Ascending aorta (tissue), 2 donors: ENCODE measurements at regions of chr9 and their contacts with region 1.

Region 1: DNA sequence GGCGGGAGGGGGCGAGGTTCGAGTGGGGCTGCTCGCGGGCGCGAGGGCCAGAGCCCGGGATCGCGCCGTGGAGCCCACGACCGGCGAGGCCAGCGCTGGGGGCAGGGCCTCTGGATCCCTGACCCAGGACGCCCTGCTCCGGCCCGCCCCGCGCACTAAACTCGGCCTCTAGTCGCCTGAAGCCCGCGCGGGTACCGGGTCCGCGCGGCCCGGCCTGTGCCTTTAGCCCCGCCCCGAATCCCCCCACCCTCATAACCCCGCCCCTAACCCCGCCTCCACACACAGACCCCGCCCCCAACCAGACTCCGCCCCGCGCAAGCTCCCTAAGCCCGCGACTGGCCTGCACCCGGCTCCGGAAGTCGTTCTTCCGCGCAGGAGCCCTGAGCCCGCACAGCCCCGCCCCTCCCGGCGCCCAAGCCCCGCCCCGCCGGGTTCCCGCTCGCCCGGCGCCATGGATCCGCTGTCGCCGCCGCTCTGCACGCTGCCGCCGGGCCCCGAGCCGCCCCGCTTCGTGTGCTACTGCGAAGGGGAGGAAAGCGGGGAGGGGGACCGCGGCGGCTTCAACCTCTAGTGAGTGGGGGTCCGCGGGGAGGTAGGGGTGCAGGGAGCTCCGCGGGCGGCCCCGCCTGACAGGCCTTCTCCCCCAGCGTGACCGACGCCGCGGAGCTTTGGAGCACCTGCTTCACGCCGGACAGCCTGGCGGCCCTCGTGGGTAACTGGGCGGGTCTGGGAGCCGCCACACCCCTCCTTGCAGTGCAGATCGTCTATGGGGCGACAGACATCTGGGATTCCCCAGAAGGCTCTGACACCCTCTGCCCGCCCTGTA is at the start of gene PAXX:
- DNase-seq: peak; percentile 57 to 93
- H3K4me3 ChIP-seq: peak within 1 kb of the TSS; percentile 79 to 85
- H3K27ac ChIP-seq: peak within 1 kb of the TSS; percentile 66 to 83
- H3K4me1 ChIP-seq: peaks cover 21 to 29% of the 10 kb centered on the region in 2 donors
- H3K27me3 ChIP-seq: no peaks in the 10 kb centered on the region
- CTCF ChIP-seq: no peak
- total RNA-seq, gene PAXX: 87.0 TPM

Region 2: GRCh38 chr9:136655536-136656182 is 336.5 kb before region 1 on chr9:
- intact Hi-C with region 1: no loop called
- DNase-seq: no peak
- H3K4me3 ChIP-seq: no peak overlapping the region
- H3K27ac ChIP-seq: peak overlapping the region in 1 of 2 donors; percentile 56
- H3K4me1 ChIP-seq: no peaks in the 10 kb centered on the region
- H3K27me3 ChIP-seq: peaks cover 10% of the 10 kb centered on the region
- CTCF ChIP-seq: no peak

Region 3: DNA sequence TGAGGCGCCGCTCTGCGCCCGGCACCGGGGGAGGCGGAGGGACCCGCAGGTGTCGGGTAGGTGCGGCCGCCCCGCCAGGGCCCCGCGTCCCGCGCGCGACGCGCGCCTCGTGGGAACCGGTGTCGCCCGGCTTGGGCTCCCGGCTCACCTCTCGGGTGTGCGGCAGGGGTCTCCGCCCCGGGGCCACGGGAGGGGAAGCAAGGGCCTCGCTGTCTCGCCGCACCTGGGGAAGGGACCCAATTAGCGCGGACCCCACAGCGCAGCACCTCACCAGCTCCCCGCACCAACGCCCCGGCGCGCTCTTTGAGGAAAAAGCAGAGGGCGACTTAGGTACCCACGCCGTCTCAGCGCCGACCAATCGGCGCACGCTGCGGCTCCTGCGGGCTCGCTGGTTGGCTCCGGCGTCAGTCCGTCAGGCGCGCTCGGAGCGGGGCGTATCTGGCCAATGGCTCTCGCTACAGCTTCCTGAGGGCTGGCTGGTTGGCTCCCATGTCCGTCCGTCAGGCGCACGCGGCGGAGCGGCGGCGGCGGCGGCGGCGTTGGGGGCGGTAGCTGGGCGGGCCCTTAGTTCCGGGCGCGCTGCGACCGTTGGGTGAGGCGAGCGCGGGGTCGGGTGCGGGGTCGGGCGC is 106.1 kb before region 1 on chr9 and contains the start of gene TRAF2:
- intact Hi-C with region 1: loop called (anchors 5 kb)
- DNase-seq: peak; percentile 88 to 98
- H3K4me3 ChIP-seq: peak within 1 kb of the TSS; percentile 89 to 96
- H3K27ac ChIP-seq: peak within 1 kb of the TSS; percentile 76 to 78
- H3K4me1 ChIP-seq: peaks cover 0 to 8% of the 10 kb centered on the region in 2 donors
- H3K27me3 ChIP-seq: no peaks in the 10 kb centered on the region
- CTCF ChIP-seq: peak in 1 of 3 experiments; percentile 30
- total RNA-seq, gene TRAF2: 4.4 TPM

Region 4: GRCh38 chr9:137029058-137029936 is 37.1 kb after region 1 on chr9:
- intact Hi-C with region 1: loop called (anchors 1 kb)
- DNase-seq: peak in 1 of 2 donors; percentile 87
- H3K4me3 ChIP-seq: peak overlapping the region; percentile 71 to 94
- H3K27ac ChIP-seq: no peak overlapping the region
- H3K4me1 ChIP-seq: peaks cover 17% of the 10 kb centered on the region in 2 donors
- H3K27me3 ChIP-seq: no peaks in the 10 kb centered on the region
- CTCF ChIP-seq: peak; percentile 68 to 88 (median 86)

Region 5: DNA sequence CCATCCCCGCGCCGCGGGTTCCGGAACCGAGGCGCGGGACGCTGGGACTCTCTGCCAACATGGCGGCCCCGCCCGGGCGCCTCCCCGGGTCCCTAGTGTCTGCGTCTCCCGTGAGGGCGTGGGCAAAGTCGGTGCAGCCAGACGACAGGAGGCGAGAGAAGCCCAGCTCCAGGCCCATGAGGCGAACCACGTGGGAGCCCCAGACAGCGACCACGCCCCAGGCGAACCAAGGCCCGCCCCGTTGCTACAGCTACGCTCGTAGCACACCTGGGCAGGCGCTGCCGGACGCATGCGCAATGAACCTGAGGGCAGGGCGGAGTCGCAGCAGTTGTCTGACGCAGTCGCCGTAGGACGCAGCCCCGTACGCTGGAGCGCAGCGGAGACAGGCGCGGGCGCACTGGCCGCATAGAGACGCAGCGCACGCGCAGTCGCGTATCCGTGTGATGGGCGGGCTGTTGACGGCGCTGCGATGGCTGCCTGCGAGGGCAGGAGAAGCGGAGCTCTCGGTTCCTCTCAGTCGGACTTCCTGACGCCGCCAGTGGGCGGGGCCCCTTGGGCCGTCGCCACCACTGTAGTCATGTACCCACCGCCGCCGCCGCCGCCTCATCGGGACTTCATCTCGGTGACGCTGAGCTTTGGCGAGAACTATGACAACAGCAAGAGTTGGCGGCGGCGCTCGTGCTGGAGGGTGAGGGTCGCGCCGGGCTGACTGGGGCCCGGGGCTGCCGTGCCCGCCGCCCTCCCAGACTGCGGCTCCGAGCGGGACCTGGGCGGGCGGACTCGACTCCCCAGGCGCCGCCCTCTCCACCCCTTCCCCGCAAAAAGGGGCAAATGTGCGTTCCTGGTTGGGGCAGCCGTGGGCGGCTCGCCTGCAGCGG is 94.6 kb after region 1 on chr9 and contains the start of gene MAN1B1:
- intact Hi-C with region 1: loop called (anchors 5 kb)
- DNase-seq: peak; percentile 94 to 98
- H3K4me3 ChIP-seq: peak within 1 kb of the TSS; percentile 74 to 99
- H3K27ac ChIP-seq: peak within 1 kb of the TSS; percentile 91 to 96
- H3K4me1 ChIP-seq: peaks cover 12 to 17% of the 10 kb centered on the region in 2 donors
- H3K27me3 ChIP-seq: no peaks in the 10 kb centered on the region
- CTCF ChIP-seq: no peak
- total RNA-seq, gene MAN1B1: 85.3 TPM

Region 6: GRCh38 chr9:137551651-137552384 is 559.6 kb after region 1 on chr9 and contains the start of gene MRPL41:
- intact Hi-C with region 1: no loop called
- DNase-seq: peak; percentile 56 to 94
- H3K4me3 ChIP-seq: peak within 1 kb of the TSS; percentile 79 to 91
- H3K27ac ChIP-seq: peak within 1 kb of the TSS; percentile 88 to 96
- H3K4me1 ChIP-seq: peaks cover 3 to 18% of the 10 kb centered on the region in 2 donors
- H3K27me3 ChIP-seq: no peaks in the 10 kb centered on the region
- CTCF ChIP-seq: no peak
- total RNA-seq, gene MRPL41: 121 TPM